Naive thymus-derived CD8-positive, alpha-beta T cell (primary cell): ENCODE measurements at regions of chr19 and their contacts with region 1.

Region 1: GRCh38 chr19:8444645-8445487 is at the start of gene HNRNPM:
- DNase-seq: peak; percentile 97 to 100 (median 100)
- ATAC-seq: peak; percentile 88 to 91
- H3K4me3 Mint-ChIP-seq: peak within 1 kb of the TSS; percentile 89 to 99 (median 97)
- H3K27ac Mint-ChIP-seq: peak within 1 kb of the TSS; percentile 94 to 99 (median 98)
- H3K4me1 Mint-ChIP-seq: peaks cover 19 to 48% (median 41%) of the 10 kb centered on the region in 4 donors
- H3K27me3 Mint-ChIP-seq: no peaks in the 10 kb centered on the region
- polyA plus RNA-seq, gene HNRNPM: 214 to 304 (median 217) TPM

Region 2: GRCh38 chr19:8412783-8413628 is 31.9 kb before region 1 on chr19 and contains the start of gene MARCHF2:
- POLR2A ChIA-PET with region 1: interaction called, 30 read pairs
- DNase-seq: peak; percentile 88 to 97 (median 94)
- ATAC-seq: peak; percentile 99 to 100
- H3K4me3 Mint-ChIP-seq: peak within 1 kb of the TSS; percentile 57 to 85 (median 74)
- H3K27ac Mint-ChIP-seq: peak within 1 kb of the TSS in 7 of 10 donors; percentile 19 to 71 (median 65)
- H3K4me1 Mint-ChIP-seq: peaks cover 3 to 19% (median 7%) of the 10 kb centered on the region in 4 donors
- H3K27me3 Mint-ChIP-seq: no peaks in the 10 kb centered on the region
- polyA plus RNA-seq, gene MARCHF2: 21.1 to 40.1 (median 38.2) TPM

Region 3: GRCh38 chr19:8423817-8424223 is 21.0 kb before region 1 on chr19:
- POLR2A ChIA-PET with region 1: no interaction called
- DNase-seq: no peak
- ATAC-seq: no peak
- H3K4me3 Mint-ChIP-seq: no peak overlapping the region
- H3K27ac Mint-ChIP-seq: no peak overlapping the region
- H3K4me1 Mint-ChIP-seq: peaks cover 0 to 2% (median 0%) of the 10 kb centered on the region in 4 donors
- H3K27me3 Mint-ChIP-seq: no peaks in the 10 kb centered on the region

Region 4: DNA sequence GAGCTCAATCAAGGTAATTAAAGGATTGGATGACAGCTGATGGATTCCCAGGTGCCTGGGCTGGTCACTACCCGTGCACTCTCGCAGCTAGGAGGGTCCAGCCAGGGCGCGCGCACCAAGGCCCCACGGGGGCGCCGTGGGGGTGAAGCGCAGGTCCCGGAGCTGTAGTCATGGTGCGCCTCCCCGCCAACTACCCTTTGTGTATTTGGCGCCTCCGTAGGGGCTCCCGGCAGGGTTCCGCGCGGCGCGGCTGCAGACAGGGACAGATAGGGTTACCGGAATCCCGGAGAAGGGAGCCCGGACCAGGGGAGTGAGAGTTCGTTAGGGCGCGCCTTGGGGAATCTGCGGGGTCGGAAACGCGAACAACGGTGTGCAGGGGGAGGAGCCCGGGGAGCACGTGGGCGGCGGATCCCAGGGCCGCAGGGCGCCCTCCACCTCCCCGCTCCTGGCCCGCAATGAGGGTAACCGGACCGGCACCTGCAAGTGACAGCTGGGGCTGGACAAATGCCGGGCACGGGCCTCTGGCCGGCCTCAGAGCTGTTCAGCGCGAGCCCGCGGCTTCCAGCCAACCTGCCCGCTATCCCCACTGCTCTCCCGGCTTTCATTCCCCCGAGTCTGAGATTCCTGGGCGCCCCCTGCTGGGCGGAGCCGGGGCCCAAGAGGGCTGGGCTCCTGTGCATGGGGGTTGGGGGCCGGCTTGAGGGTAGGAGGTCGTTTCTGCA is 61.0 kb after region 1 on chr19:
- POLR2A ChIA-PET with region 1: interaction called, 12 read pairs
- DNase-seq: peak; percentile 34 to 78 (median 64)
- ATAC-seq: peak; percentile 83 to 86
- H3K4me3 Mint-ChIP-seq: peak overlapping the region; percentile 90 to 97 (median 94)
- H3K27ac Mint-ChIP-seq: peak overlapping the region; percentile 68 to 95 (median 92)
- H3K4me1 Mint-ChIP-seq: peaks cover 14 to 38% (median 26%) of the 10 kb centered on the region in 4 donors
- H3K27me3 Mint-ChIP-seq: no peaks in the 10 kb centered on the region

Region 5: DNA sequence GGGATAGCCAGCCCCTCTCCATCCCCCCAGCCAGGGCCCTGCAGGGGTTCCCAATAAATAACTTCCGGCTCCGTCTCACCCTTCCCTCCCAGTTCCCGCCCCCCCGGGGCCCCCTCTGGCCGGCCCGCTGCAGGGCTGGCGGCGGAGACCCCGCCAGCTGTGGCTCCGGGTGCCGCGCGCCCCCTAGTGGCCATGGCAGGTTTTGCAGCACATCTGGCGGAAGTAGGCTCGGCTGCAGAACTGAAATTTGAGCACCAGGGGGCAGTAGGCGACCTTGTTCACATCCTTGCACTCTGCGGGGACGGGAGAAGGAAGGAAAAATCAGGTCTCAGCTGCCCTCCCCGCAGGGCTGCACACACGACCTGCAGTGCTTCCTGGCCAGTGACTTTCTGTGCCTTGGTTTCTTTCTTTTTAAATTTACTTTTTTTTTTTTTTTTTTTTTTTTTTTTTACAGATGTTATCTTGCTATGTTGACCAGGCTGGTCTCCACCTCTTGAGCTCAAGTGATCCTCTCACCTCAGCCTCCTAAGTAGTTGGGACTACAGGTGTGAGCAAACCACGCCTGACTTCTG is 135.9 kb after region 1 on chr19:
- POLR2A ChIA-PET with region 1: interaction called, 13 read pairs
- DNase-seq: peak; percentile 74 to 92 (median 86)
- ATAC-seq: peak; percentile 53 to 70
- H3K4me3 Mint-ChIP-seq: no peak overlapping the region
- H3K27ac Mint-ChIP-seq: peak overlapping the region in 2 of 10 donors; percentile 68 to 69
- H3K4me1 Mint-ChIP-seq: peaks cover 18 to 49% (median 41%) of the 10 kb centered on the region in 4 donors
- H3K27me3 Mint-ChIP-seq: no peaks in the 10 kb centered on the region

Region 6: DNA sequence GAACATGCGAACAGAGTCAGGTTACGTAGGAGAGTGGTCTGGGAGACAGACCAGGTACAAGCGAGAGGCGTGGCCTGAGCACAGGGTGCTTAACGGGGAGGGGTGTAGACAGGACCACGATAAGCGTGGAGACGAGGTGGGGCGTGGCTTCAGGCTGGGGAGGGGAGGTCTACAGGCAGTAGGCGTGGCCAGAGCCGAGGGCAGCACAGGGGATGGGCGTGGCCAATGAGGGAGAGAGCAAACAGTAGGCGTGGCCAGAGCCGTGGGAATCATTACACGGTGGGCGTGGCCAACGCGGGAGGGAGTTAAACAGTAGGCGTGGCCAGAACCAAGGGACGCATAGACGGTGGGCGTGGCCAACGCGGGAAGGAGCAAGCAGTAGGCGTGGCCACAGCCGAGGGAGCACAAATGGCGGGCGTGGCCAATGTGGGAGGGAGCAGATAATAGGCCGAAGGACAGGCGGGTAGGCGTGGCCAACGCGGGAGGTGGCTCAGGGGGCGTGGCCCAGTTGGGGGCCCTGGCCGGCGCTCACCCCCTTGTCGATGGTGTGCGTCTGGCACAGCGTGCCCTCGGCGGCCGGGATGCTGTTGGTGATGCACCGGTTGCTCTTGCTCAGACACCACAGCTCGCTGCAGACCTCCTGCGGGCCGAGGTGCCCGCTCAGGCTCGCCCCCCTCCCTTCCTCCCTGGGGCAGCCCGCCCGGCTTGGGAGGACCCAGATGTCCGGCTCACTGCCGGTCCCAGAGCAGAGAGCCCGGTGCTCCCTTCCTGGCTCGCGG is 147.6 kb after region 1 on chr19:
- POLR2A ChIA-PET with region 1: interaction called, 10 read pairs
- DNase-seq: peak; percentile 92 to 98 (median 98)
- ATAC-seq: peak; percentile 88 to 89
- H3K4me3 Mint-ChIP-seq: peak overlapping the region; percentile 72 to 92 (median 88)
- H3K27ac Mint-ChIP-seq: peak overlapping the region; percentile 1 to 96 (median 82)
- H3K4me1 Mint-ChIP-seq: peaks cover 18 to 45% (median 32%) of the 10 kb centered on the region in 4 donors
- H3K27me3 Mint-ChIP-seq: no peaks in the 10 kb centered on the region